G401 (cell line): ENCODE measurements at regions of chr5 and their contacts with region 1.

Region 1: DNA sequence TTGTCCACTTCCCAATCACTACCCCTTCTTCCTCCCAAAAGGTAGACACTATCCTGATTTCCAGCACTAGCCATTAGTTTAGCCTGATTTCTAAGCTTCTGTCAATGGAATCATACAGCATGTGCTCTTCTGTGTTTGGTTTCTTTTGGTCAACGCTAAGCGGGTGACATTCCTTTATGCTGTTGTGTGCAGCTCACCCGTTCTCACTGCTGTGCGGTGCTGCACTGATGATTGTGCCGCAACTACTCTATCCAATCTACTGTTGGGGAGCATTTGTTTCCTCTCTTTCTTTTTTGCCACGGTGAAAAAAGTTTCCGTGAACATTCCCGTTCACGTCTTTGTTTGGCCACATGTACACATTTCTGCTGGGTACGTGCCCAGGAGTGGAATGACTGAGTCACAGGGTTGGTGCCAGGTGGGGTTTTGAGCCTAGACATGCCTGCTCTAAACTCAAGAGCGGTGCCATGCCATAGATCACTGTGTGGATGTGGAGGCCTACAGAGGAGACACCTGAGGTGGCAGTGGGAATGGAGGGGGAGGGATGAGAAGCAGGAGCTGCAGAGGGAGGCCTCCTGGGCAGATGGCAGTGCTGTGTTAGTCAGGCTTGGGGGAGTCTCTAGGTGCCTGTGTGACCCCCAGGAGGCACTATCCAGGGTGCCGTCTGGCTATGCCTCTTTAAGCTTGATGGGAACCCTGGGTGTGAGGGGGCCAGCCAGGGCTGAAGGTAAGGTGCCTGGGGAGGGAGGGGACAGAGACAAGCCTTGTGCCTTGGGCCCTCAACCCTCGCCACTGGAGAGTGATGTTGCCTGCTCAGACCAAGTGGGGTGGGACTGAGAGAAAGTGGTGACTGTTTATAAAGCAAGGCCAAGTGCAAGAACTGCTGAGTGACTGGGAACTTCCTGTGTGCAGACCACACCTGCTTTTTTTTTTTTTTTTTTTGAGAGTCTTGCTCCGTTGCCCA is 11.4 kb upstream of the ANKRD33B start:
- DNase-seq: no peak

Region 2: DNA sequence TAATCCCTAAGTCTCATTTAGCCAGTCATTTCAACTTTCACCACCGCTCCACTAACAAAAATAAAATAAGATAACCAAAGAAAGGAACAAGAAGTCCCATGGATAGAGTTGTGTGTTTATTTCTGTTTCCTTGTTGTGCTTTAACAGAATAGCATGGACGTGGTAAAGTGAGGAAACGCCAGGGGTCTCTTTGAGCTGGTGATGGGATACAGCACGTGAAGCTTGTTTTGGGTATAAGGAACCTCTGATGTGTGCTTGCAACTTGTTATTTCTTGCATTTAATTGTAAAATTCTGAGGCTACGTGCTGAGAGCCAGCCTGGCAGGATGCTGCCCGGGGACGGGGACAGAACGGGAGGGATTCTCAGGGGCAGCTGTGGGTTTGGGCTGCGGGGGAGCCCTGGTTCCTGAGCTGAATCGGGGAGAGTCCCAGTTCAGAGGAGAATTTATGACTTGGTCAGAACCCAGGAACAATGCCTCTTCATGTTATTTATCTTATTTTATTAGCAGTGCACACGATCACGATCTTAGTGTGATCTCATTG is 74.8 kb after region 1 on chr5:
- in situ Hi-C with region 1: loop called (anchors 5 kb)
- DNase-seq: no peak